ENCODE measurements at regions of chr2 and their contacts with region 1.

Region 1: GRCh38 chr2:169131587-169132512 is 62.5 kb downstream of the DHRS9 start:
- DNase-seq: peak; percentile 28 to 55
- ATAC-seq: peak; percentile 43 to 86; a peak in 3 of 6 replicates
- H3K4me3 ChIP-seq: no peak overlapping the region
- H3K27ac ChIP-seq: no peak overlapping the region
- H3K4me1 ChIP-seq: no peaks in the 10 kb centered on the region
- CTCF ChIP-seq: peak; percentile 83
- EP300 ChIP-seq: no peak
- POLR2A ChIP-seq: no peak
- RAD21 ChIP-seq: peak; percentile 46 to 53; a peak in 4 of 5 replicates

Region 2: GRCh38 chr2:168956392-168956791 is 175.5 kb before region 1 on chr2:
- CTCF ChIA-PET with region 1: interaction called, 16 read pairs
- POLR2A ChIA-PET with region 1: no interaction called
- DNase-seq: no peak
- ATAC-seq: no peak
- H3K4me3 ChIP-seq: no peak overlapping the region
- H3K27ac ChIP-seq: no peak overlapping the region
- H3K4me1 ChIP-seq: no peaks in the 10 kb centered on the region
- CTCF ChIP-seq: no peak
- EP300 ChIP-seq: no peak
- POLR2A ChIP-seq: no peak
- RAD21 ChIP-seq: no peak

Region 3: GRCh38 chr2:168961450-168962229 is 170.2 kb before region 1 on chr2:
- CTCF ChIA-PET with region 1: interaction called, 16 read pairs
- POLR2A ChIA-PET with region 1: no interaction called
- DNase-seq: peak; percentile 27 to 80
- ATAC-seq: peak; percentile 89 to 95
- H3K4me3 ChIP-seq: no peak overlapping the region
- H3K27ac ChIP-seq: no peak overlapping the region
- H3K4me1 ChIP-seq: no peaks in the 10 kb centered on the region
- CTCF ChIP-seq: peak; percentile 90
- EP300 ChIP-seq: no peak
- POLR2A ChIP-seq: no peak
- RAD21 ChIP-seq: peak; percentile 89 to 90

Region 4: GRCh38 chr2:168971261-168971660 is 160.6 kb before region 1 on chr2:
- CTCF ChIA-PET with region 1: interaction called, 10 read pairs
- POLR2A ChIA-PET with region 1: no interaction called
- DNase-seq: no peak
- ATAC-seq: no peak
- H3K4me3 ChIP-seq: no peak overlapping the region
- H3K27ac ChIP-seq: no peak overlapping the region
- H3K4me1 ChIP-seq: no peaks in the 10 kb centered on the region
- CTCF ChIP-seq: no peak
- EP300 ChIP-seq: no peak
- POLR2A ChIP-seq: no peak
- RAD21 ChIP-seq: no peak

Region 5: GRCh38 chr2:169119126-169119770 is 12.6 kb before region 1 on chr2:
- CTCF ChIA-PET with region 1: interaction called, 16 read pairs
- POLR2A ChIA-PET with region 1: no interaction called
- DNase-seq: no peak
- ATAC-seq: no peak
- H3K4me3 ChIP-seq: no peak overlapping the region
- H3K27ac ChIP-seq: no peak overlapping the region
- H3K4me1 ChIP-seq: no peaks in the 10 kb centered on the region
- CTCF ChIP-seq: no peak
- EP300 ChIP-seq: no peak
- POLR2A ChIP-seq: no peak
- RAD21 ChIP-seq: no peak

Region 6: GRCh38 chr2:169260246-169260645 is 128.4 kb after region 1 on chr2:
- CTCF ChIA-PET with region 1: no interaction called
- POLR2A ChIA-PET with region 1: no interaction called
- DNase-seq: peak in 1 of 2 experiments; percentile 18
- ATAC-seq: peak in 1 of 2 experiments; percentile 37; a peak in 2 of 6 replicates
- H3K4me3 ChIP-seq: no peak overlapping the region
- H3K27ac ChIP-seq: no peak overlapping the region
- H3K4me1 ChIP-seq: no peaks in the 10 kb centered on the region
- CTCF ChIP-seq: no peak
- EP300 ChIP-seq: no peak
- POLR2A ChIP-seq: no peak
- RAD21 ChIP-seq: no peak

Measured in A549 (cell line).